ENCODE measurements at regions of chr3 and their contacts with region 1.

Region 1: GRCh38 chr3:186540221-186540834 is 3.9 kb downstream of the CRYGS start:
- DNase-seq: peak; percentile 85
- H3K4me3 Mint-ChIP-seq: no peak overlapping the region
- H3K27ac Mint-ChIP-seq: peak overlapping the region; percentile 2
- H3K4me1 Mint-ChIP-seq: peaks cover 21% of the 10 kb centered on the region
- H3K27me3 Mint-ChIP-seq: no peaks in the 10 kb centered on the region

Region 2: GRCh38 chr3:185942907-185943759 is 597.2 kb before region 1 on chr3:
- CTCF ChIA-PET with region 1: interaction called, 28 read pairs
- POLR2A ChIA-PET with region 1: interaction called, 3 read pairs
- DNase-seq: peak; percentile 88
- H3K4me3 Mint-ChIP-seq: peak overlapping the region; percentile 8
- H3K27ac Mint-ChIP-seq: no peak overlapping the region
- H3K4me1 Mint-ChIP-seq: peaks cover 15% of the 10 kb centered on the region
- H3K27me3 Mint-ChIP-seq: peaks cover 15% of the 10 kb centered on the region

Region 3: GRCh38 chr3:186002884-186003472 is 537.4 kb before region 1 on chr3:
- CTCF ChIA-PET with region 1: interaction called, 11 read pairs
- POLR2A ChIA-PET with region 1: no interaction called
- DNase-seq: no peak
- H3K4me3 Mint-ChIP-seq: no peak overlapping the region
- H3K27ac Mint-ChIP-seq: no peak overlapping the region
- H3K4me1 Mint-ChIP-seq: no peaks in the 10 kb centered on the region
- H3K27me3 Mint-ChIP-seq: peaks cover 28% of the 10 kb centered on the region

Region 4: DNA sequence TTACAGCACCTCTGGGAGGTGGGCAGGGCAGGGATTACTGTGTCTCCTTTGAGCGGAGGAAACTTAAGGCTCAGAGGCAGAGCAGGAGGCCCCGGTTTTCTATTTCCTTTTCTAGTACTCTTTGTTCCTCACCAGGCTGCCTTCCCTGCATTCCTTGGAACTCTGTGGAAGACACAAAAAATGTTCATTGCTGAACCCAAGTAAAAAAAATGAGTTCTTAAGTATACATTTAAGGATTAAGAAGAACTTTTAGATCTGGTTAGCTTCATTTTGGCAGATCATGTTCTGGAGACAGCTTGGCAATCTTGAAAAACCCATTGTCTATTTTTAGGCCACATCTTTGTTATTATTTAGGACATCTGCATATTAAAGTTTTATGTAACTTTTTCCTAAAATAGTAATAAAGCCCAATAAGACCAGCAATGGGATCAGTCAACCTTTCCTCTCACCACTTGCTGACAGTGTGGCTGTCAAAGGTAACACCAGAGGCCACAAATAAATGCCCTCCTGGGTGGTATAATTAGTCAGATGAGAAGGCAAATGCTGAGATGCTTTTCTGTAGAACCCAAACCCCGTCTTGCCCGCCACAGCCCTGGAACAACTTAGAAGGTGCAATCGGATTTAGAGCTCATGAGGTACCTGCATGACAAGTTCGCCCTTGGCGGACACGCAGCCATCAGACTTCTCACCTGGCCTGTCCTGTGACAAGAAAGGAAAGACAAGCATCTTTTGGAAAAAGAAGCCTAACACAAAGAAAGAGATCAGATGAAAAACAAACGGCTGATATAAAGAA is 275.5 kb before region 1 on chr3:
- CTCF ChIA-PET with region 1: interaction called, 110 read pairs
- POLR2A ChIA-PET with region 1: interaction called, 6 read pairs
- DNase-seq: no peak
- H3K4me3 Mint-ChIP-seq: no peak overlapping the region
- H3K27ac Mint-ChIP-seq: no peak overlapping the region
- H3K4me1 Mint-ChIP-seq: peaks cover 1% of the 10 kb centered on the region
- H3K27me3 Mint-ChIP-seq: peaks cover 12% of the 10 kb centered on the region

Region 5: GRCh38 chr3:186551387-186551786 is 11.1 kb after region 1 on chr3:
- CTCF ChIA-PET with region 1: interaction called, 27 read pairs
- POLR2A ChIA-PET with region 1: interaction called, 4 read pairs
- DNase-seq: no peak
- H3K4me3 Mint-ChIP-seq: no peak overlapping the region
- H3K27ac Mint-ChIP-seq: no peak overlapping the region
- H3K4me1 Mint-ChIP-seq: no peaks in the 10 kb centered on the region
- H3K27me3 Mint-ChIP-seq: no peaks in the 10 kb centered on the region

Region 6: DNA sequence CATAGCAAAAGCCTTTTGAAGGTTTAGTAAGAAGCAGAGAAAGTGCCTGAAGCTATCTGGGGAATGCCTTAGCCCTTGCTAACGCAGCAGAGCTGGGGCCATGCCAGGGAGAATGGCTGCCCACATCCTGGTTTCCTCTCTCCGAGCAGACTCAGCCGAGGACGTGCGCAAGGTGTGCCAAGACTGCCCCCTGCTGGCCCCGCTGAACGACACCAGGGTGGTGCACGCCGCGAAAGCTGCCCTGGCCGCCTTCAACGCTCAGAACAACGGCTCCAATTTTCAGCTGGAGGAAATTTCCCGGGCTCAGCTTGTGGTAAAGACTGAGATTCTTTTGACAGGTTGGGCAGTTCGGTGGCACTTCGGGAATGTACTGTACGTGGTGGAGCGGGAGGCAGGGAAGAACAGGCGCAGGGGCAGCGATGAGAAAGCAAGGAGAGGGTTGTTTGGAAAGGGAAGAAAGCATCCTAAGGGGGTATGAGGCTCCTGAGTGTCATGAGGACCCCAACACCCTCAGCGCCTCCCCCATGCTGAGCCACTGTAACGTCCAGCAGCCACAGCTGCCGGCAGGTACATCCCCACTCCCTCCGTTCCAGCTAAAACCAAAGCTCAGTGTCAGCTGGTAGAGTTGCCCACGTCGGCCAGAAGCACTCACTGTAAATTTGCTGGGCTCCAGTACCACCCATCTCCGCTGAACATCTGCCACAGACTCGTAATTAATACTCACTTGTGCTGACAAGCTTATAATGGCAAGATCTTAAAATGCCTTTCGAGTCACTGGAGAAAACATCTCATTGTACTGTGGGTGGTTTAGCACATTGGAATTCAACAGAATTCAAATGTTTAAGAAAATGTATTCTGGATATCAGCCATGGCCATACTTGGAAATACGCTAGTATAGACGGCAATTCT is 77.0 kb after region 1 on chr3:
- CTCF ChIA-PET with region 1: interaction called, 44 read pairs
- POLR2A ChIA-PET with region 1: no interaction called
- DNase-seq: peak; percentile 87
- H3K4me3 Mint-ChIP-seq: peak overlapping the region; percentile 9
- H3K27ac Mint-ChIP-seq: no peak overlapping the region
- H3K4me1 Mint-ChIP-seq: peaks cover 24% of the 10 kb centered on the region
- H3K27me3 Mint-ChIP-seq: peaks cover 41% of the 10 kb centered on the region